PC-3 (cell line): ENCODE measurements at regions of chr13 and their contacts with region 1.

Region 1: DNA sequence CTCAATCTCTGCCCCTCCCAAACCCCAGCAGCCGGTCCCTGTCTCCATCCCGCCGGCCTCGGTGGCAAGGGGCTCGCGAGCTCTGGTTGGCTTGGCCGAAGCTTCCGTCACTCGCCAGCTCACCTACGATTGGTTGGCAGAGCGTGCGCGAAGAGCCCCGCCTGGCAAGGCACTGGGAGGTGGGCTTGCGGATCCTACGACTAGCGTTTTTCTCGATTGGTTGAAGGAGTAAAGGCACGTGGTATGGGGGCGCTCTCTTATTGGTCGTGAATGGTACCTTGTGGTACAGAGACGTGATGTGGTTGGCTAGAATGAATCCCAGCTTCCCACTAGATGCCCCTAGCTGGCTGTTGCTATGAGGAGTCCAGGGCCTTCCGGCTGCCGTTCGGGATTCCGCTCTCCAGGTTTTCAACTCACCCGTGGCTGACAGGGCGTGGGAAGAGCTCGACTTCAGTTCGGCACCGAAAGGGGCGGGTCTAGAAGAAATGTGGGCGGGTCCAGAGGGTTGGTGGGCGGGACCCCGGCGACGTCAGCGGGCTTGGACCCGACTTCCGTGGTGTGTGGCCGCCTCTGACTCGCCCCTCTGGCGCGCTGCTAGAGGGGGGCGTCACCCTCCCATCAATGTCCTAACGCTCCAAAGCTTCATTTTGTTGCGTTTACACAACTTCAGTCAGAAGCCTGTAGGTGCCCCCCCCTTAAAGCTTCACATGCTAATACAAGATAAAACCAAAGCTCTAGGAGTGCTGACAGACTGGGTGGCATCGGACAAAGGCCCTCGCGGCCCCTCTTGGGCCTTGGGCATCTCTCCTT is 847 bp upstream of the RAP2A start:
- DNase-seq: peak; percentile 96
- ATAC-seq: peak; percentile 80
- H3K4me3 ChIP-seq: peak overlapping the region; percentile 99
- H3K27ac ChIP-seq: peak overlapping the region; percentile 94
- H3K4me1 ChIP-seq: peaks cover 9% of the 10 kb centered on the region
- H3K27me3 ChIP-seq: no peaks in the 10 kb centered on the region
- CTCF ChIP-seq: no peak

Region 2: DNA sequence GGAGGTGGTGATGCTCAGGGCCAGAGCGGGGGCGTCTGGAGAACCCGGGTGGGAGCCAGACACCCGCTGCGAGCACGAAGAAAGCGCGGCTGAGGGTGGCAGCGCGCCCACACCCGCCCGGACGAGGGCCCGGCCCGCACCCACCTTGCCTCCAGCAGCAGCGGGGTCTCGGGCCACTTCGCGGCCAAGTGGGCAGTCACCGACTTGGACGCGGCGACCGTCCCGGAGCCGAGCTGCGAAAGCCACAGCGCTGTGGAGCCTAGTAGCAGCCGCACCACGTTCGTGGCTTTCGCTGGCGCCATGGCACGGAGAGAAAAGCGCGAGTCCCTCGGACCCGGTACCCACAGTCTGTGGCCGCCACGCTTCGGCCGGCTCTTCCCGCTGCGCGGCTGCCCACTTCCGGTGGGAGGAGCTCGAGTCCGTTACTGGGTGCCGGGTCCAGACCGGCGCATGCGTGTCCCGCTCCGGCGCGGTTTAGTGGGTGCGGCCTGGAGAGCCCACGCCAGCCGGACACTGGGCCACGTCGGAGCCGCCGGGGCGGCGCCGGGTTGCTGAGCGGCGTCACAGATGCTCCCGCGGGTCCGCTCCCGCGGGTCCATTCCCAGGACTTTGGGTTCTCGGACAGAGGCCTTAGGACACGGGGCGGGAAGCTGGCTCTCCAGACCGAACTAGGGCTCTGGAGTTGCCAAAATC is 1380.0 kb before region 1 on chr13 and contains the start of gene UGGT2:
- CTCF ChIA-PET with region 1: no interaction called
- POLR2A ChIA-PET with region 1: interaction called, 4 read pairs
- intact Hi-C with region 1: loop called (anchors 5 kb)
- DNase-seq: peak; percentile 91
- ATAC-seq: peak; percentile 99
- H3K4me3 ChIP-seq: peak within 1 kb of the TSS; percentile 80
- H3K27ac ChIP-seq: peak within 1 kb of the TSS; percentile 83
- H3K4me1 ChIP-seq: no peaks in the 10 kb centered on the region
- H3K27me3 ChIP-seq: no peaks in the 10 kb centered on the region
- CTCF ChIP-seq: no peak
- total RNA-seq, gene UGGT2: 12.2 and 24.3 TPM in 2 replicates

Region 3: GRCh38 chr13:97284558-97284957 is 148.6 kb before region 1 on chr13:
- CTCF ChIA-PET with region 1: no interaction called
- POLR2A ChIA-PET with region 1: no interaction called
- intact Hi-C with region 1: no loop called
- DNase-seq: no peak
- ATAC-seq: no peak
- H3K4me3 ChIP-seq: no peak overlapping the region
- H3K27ac ChIP-seq: no peak overlapping the region
- H3K4me1 ChIP-seq: peaks cover 30% of the 10 kb centered on the region
- H3K27me3 ChIP-seq: no peaks in the 10 kb centered on the region
- CTCF ChIP-seq: no peak

Region 4: DNA sequence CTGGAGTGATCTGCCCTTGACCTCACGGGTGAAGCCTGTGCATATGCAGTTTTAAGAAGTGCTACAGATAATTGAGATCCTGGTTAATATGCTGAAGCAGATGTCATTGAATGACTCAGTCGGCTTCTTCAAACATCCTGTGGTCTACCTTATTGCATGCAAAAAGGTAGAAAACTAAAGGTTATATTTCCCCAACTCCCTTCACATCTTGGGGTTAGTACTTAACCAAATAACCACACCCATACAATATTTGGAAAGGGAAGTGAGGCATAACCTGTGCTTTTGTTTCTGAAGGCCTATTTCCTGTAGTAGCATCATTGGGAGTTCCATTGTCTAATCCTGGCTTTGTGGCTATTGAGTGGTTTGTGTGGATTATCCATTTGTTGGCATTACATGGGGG is 59.1 kb after region 1 on chr13:
- CTCF ChIA-PET with region 1: no interaction called
- POLR2A ChIA-PET with region 1: interaction called, 3 read pairs
- intact Hi-C with region 1: loop called (anchors 2 kb)
- DNase-seq: peak; percentile 86
- ATAC-seq: peak; percentile 90
- H3K4me3 ChIP-seq: no peak overlapping the region
- H3K27ac ChIP-seq: peak overlapping the region; percentile 97
- H3K4me1 ChIP-seq: peaks cover 23% of the 10 kb centered on the region
- H3K27me3 ChIP-seq: no peaks in the 10 kb centered on the region
- CTCF ChIP-seq: no peak

Region 5: DNA sequence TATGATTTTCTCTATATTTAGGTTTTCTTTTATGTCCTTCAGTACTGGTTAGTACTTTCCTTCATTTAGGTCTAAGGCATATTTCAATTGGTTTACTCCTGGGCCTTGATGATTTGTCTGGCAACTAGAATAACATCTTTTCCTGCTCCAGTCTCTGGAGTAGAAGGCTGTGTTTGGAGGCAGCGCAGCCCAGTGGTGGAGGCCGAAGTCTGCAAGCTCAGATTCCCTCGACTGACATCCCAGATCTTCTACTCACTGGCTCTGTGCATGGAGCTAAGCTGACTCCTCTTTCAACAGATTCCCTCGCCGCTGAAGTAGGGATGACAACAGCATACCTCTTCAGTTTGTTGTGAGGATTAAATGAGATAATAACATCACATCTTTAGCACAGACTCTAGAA is 141.8 kb after region 1 on chr13:
- CTCF ChIA-PET with region 1: no interaction called
- POLR2A ChIA-PET with region 1: no interaction called
- intact Hi-C with region 1: loop called (anchors 2 kb)
- DNase-seq: peak; percentile 59
- ATAC-seq: peak; percentile 91
- H3K4me3 ChIP-seq: no peak overlapping the region
- H3K27ac ChIP-seq: no peak overlapping the region
- H3K4me1 ChIP-seq: no peaks in the 10 kb centered on the region
- H3K27me3 ChIP-seq: no peaks in the 10 kb centered on the region
- CTCF ChIP-seq: peak; percentile 72

Region 6: GRCh38 chr13:99087096-99087953 is 1654.2 kb after region 1 on chr13:
- CTCF ChIA-PET with region 1: no interaction called
- POLR2A ChIA-PET with region 1: no interaction called
- intact Hi-C with region 1: loop called (anchors 10 kb)
- DNase-seq: peak; percentile 84
- ATAC-seq: peak; percentile 75
- H3K4me3 ChIP-seq: peak overlapping the region; percentile 87
- H3K27ac ChIP-seq: peak overlapping the region; percentile 8; the same call in 1 of the 2 replicates
- H3K4me1 ChIP-seq: peaks cover 6% of the 10 kb centered on the region
- H3K27me3 ChIP-seq: no peaks in the 10 kb centered on the region
- CTCF ChIP-seq: 0 out of 2 replicates have a peak, but pooled peaks have one; percentile 11